CD8-positive, alpha-beta T cell (primary cell): ENCODE measurements at regions of chr22 and their contacts with region 1.

Region 1: GRCh38 chr22:28817919-28818909 is 17.8 kb upstream of the XBP1 start:
- DNase-seq: peak in 1 of 9 experiments; percentile 25
- ATAC-seq: no peak
- H3K4me3 ChIP-seq: no peak overlapping the region
- H3K4me3 Mint-ChIP-seq: no peak overlapping the region
- H3K27ac ChIP-seq: no peak overlapping the region
- H3K27ac Mint-ChIP-seq: no peak overlapping the region
- H3K4me1 ChIP-seq: peaks cover 64% of the 10 kb centered on the region
- H3K4me1 Mint-ChIP-seq: peaks cover 70% of the 10 kb centered on the region
- H3K27me3 ChIP-seq: no peaks in the 10 kb centered on the region
- H3K27me3 Mint-ChIP-seq: no peaks in the 10 kb centered on the region
- CTCF ChIP-seq: no peak

Region 2: GRCh38 chr22:28791841-28792490 is 26.2 kb before region 1 on chr22:
- CTCF ChIA-PET with region 1: interaction called, 17 read pairs
- POLR2A ChIA-PET with region 1: interaction called, 106 read pairs
- intact Hi-C with region 1: no loop called
- DNase-seq: no peak
- ATAC-seq: no peak
- H3K4me3 ChIP-seq: no peak overlapping the region
- H3K4me3 Mint-ChIP-seq: no peak overlapping the region
- H3K27ac ChIP-seq: peak overlapping the region in 1 of 2 experiments; percentile 55
- H3K27ac Mint-ChIP-seq: peak overlapping the region; percentile 33
- H3K4me1 ChIP-seq: peaks cover 43% of the 10 kb centered on the region
- H3K4me1 Mint-ChIP-seq: peaks cover 56% of the 10 kb centered on the region
- H3K27me3 ChIP-seq: no peaks in the 10 kb centered on the region
- H3K27me3 Mint-ChIP-seq: no peaks in the 10 kb centered on the region
- CTCF ChIP-seq: no peak